WTC11 (cell line): ENCODE measurements at regions of chr11 and their contacts with region 1.

Region 1: GRCh38 chr11:33525789-33526188 is 174.8 kb downstream of the C11orf91 start:
- DNase-seq: peak; percentile 30
- ATAC-seq: peak; percentile 99
- H3K4me3 Mint-ChIP-seq: no peak overlapping the region
- H3K27ac Mint-ChIP-seq: no peak overlapping the region
- H3K4me1 Mint-ChIP-seq: peaks cover 4% of the 10 kb centered on the region
- H3K27me3 Mint-ChIP-seq: no peaks in the 10 kb centered on the region
- CTCF ChIP-seq: no peak

Region 2: GRCh38 chr11:33362051-33362910 is 163.5 kb before region 1 on chr11:
- CTCF ChIA-PET with region 1: interaction called, 15 read pairs
- POLR2A ChIA-PET with region 1: no interaction called
- DNase-seq: no peak
- ATAC-seq: no peak
- H3K4me3 Mint-ChIP-seq: no peak overlapping the region
- H3K27ac Mint-ChIP-seq: no peak overlapping the region
- H3K4me1 Mint-ChIP-seq: no peaks in the 10 kb centered on the region
- H3K27me3 Mint-ChIP-seq: no peaks in the 10 kb centered on the region
- CTCF ChIP-seq: peak; percentile 68

Region 3: DNA sequence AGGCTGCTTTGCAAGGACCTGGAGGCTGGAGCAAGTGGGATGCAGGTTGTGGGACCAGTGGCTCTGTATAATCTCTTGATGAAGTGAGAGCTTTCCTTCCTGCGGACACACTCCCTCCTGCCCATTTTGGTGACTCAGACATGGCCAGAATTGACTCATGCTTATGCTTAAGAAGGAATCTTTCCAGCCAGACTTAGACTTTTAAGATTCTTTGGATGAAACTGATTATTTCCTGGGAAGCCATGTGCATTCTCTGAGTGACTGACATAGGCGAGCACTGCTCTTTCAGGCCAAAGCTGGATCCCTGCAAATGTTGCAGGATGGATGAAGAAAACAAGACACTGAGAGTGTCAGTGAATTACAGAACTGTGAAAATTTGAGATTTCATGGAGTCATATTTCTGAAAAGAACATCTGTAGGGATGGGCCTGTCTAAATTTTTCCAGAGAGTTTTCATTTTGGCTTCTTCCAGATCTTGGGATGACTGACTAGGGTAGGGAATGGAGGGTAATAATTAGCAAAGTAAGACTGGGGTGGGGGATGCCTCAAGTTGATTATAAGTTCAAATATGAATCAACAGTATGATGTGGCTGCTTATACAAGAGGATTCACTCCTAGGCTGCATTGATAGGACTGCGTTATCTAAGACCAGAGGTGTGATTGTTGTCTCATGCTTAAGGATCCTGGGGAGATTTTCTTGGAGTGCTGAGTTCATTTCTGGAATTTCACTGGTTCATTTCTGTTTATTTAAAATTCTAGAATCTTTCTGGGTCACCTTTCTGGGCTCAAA is 72.8 kb before region 1 on chr11:
- CTCF ChIA-PET with region 1: no interaction called
- POLR2A ChIA-PET with region 1: no interaction called
- DNase-seq: no peak
- ATAC-seq: no peak
- H3K4me3 Mint-ChIP-seq: no peak overlapping the region
- H3K27ac Mint-ChIP-seq: no peak overlapping the region
- H3K4me1 Mint-ChIP-seq: no peaks in the 10 kb centered on the region
- H3K27me3 Mint-ChIP-seq: no peaks in the 10 kb centered on the region
- CTCF ChIP-seq: no peak